Heart left ventricle (tissue), 16 donors: ENCODE measurements at regions of chr6 and their contacts with region 1.

Region 1: GRCh38 chr6:134537146-134537555 is 219.2 kb upstream of the SGK1 start:
- DNase-seq: no peak
- ATAC-seq: no peak
- H3K4me3 ChIP-seq: no peak overlapping the region
- H3K27ac ChIP-seq: no peak overlapping the region
- H3K4me1 ChIP-seq: peaks cover 3 to 38% (median 14%) of the 10 kb centered on the region in 12 donors
- H3K27me3 ChIP-seq: no peaks in the 10 kb centered on the region
- CTCF ChIP-seq: no peak
- POLR2A ChIP-seq: no peak

Region 2: DNA sequence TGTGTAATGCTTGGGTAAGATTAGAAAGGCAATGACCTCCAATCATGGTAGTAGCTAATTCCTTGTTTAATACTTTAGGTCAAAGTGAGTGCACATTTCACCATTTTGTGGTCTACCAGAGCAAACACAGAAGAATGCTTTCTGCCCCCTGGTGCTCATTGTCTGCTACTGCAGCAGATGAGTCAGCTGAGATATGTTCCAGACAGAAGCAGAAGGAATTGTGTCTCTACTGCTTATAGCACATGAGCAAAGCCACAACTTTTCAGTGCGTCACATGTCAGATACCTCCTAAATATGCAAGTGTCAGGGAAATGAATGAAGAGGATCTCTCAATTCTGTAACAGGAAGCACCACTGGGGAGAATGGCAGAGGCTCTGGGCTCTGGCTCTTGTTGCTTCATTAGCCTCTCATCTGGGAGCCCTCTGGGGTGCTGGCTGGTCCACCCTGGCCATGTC is 103.9 kb after region 1 on chr6:
- intact Hi-C with region 1: loop called in 1 of 10 experiments (anchors 5 kb)
- DNase-seq: peak; percentile 67 to 78 (median 77)
- ATAC-seq: peak; percentile 85 to 92 (median 89)
- H3K4me3 ChIP-seq: no peak overlapping the region
- H3K27ac ChIP-seq: peak overlapping the region in 3 of 12 donors; percentile 9 to 53 (median 36)
- H3K4me1 ChIP-seq: peaks cover 0 to 27% (median 6%) of the 10 kb centered on the region in 12 donors
- H3K27me3 ChIP-seq: no peaks in the 10 kb centered on the region
- CTCF ChIP-seq: peak; percentile 89 to 99 (median 94)
- POLR2A ChIP-seq: no peak